Cardiac septum (tissue), 1 donor: ENCODE measurements at regions of chr2 and their contacts with region 1.

Region 1: DNA sequence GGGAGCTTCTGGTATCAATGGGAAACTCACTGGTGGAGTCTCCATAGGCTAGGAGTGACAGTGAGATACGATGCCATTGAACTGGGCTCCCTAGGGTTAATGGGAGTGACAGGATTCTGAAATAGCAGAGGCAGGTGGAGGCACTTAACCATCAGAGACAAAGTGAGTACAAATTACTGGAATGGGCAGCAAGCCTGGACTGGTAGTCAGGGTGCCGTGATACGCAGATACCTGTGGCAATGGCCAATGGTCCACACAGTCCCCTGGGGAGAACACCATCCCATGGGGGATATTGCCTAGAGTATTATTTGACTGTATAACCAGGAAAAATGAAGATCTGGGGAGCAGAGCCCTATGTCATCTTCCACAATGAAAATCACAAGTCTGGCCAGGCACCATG is 17.3 kb downstream of the CHCHD5 start:
- DNase-seq: no peak

Region 2: DNA sequence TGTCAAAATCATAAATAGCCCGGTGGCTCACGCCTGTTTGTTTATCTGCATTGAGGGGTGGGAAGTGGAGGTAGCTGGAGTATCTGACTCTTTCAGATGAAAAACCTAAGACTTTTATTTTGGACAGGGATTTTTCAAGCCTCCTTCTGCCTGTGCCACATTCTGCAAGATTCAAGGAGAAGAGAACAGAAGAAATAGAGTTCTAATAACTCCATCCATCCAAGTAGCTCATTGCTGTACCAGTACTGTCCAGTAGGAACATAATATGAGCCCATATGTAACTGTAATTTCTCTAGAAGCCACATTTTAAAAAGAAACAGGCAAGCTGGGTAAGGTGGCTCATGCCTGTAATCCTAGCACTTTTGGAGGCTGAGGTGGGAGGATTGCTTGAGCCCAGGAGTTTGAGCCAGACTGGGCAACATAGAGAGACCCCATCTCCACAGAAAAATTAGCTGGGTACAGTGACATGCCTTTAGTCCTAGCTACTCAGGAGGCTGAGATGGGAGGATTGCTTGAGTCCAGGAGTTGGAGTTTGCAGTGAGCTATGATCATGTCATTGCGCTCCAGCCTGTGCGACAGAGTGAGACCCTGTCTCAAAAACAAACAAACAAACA is 83.6 kb after region 1 on chr2:
- intact Hi-C with region 1: loop called (anchors 5 kb)
- DNase-seq: no peak

Region 3: DNA sequence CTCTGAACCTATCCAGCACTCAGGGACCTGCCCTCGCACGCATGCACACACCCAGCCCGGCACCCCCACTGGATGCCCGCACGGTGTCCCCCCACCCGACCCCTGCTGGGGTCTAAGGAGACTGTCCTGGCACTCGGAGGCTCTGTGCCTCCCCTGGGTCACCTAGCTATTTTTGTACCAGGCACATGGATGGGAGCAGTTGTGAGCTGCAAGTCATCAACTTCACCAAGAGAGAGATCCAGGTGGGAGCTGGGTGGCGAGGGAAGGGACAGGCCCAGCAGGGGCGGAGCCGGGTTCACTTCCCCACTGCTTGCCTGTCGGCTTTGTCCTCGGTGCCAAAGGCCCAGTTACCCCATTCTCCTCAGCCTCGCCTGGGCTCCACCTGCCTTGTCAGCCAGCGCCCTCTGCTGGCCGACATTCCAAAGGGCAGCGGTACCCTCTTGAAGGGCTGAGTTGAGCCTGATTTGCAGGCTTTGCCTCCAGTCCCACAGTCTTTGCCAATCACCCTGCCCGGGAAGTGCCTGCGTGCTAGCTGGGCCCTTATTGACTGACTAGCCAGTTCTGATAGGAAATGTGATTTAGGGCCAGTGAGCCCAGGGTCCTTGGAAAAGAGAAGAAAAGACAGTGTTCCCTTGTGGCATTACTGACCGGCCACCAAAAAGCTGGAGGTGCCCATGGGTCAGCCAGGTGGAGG is 124.9 kb after region 1 on chr2:
- intact Hi-C with region 1: loop called (anchors 1 kb)
- DNase-seq: peak; percentile 95

Region 4: DNA sequence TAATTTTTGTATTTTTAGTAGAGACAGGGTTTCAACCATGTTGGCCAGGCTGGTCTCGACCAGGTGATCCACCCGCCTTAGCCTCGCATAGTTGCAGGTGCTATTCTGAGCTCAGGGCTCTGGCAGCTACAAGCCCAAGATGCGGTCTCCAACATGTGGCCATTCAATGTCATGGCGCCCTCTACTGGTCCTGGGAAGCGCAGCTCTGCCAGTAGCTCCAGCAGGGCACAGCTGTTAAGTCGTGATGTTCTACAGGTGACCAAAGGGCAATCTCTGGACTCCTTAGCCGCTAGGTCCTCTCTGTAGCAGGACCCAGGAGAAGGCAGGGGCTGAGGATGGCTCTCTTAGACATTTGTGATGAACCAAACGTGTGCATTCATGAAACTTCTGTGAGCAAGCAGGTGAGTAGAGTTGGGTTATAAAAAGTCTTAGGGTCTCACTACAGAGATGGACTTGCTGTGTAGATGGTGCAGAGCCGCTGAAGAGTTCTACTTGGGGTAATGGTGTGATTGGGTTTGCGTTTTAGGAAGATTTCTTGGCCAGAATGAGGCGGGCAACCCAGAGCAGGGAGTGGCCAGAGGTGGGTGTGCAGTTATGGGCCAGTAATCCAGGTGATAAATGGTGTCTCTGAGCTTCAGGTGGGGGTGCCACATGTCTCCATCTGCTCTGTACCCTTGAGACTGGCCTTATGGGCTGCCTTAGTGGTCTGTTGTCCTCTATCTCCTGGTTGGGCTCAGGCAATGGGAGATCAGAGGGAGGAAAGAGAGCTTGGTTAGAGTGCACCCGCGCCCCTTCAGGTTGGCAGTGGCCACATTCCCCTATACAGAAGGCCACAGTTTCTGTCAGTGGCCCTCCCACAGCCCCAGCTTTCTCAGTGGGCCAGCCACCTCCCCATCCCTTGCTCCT is 340.3 kb after region 1 on chr2:
- intact Hi-C with region 1: loop called (anchors 10 kb)
- DNase-seq: no peak